ENCODE measurements at regions of chr20 and their contacts with region 1.

Region 1: GRCh38 chr20:34874094-34874654 is 1.5 kb upstream of the GGT7 start:
- DNase-seq: peak in 1 of 2 donors; percentile 89
- H3K4me3 ChIP-seq: no peak overlapping the region
- H3K27ac ChIP-seq: peak overlapping the region; percentile 96
- H3K4me1 ChIP-seq: peaks cover 61% of the 10 kb centered on the region
- H3K27me3 ChIP-seq: no peaks in the 10 kb centered on the region
- CTCF ChIP-seq: peak; percentile 58 to 88 (median 75)
- POLR2A ChIP-seq: no peak

Region 2: GRCh38 chr20:34955232-34956040 is 81.3 kb after region 1 on chr20 and contains the starts of genes GSS and MYH7B:
- intact Hi-C with region 1: loop called (anchors 2 kb)
- DNase-seq: peak; percentile 97 to 98
- H3K4me3 ChIP-seq: peak within 1 kb of the TSS; percentile 62 to 67
- H3K27ac ChIP-seq: peak within 1 kb of the TSS; percentile 82
- H3K4me1 ChIP-seq: peaks cover 17% of the 10 kb centered on the region
- H3K27me3 ChIP-seq: no peaks in the 10 kb centered on the region
- CTCF ChIP-seq: peak; percentile 14 to 54 (median 51)
- POLR2A ChIP-seq: peak in 1 of 2 donors; percentile 74
- total RNA-seq, gene GSS: 47.9 TPM
- total RNA-seq, gene MYH7B: under 0.01 TPM

Measured in vagina (tissue), 2 donors.